Activated T-helper 1 cell treated with anti-CD3 and anti-CD28 coated beads, Interleukin-12 subunit alpha, Interleukin-12 subunit beta, Interleukin-2, Interleukin-4 antibody, amounts not matched to agents 30 ng/mL and 10 ng/mL and 1 ng/mL, durations not matched to agents 14 hours and 24 hours and 36 hours (primary cell): ENCODE measurements at regions of chr1 and their contacts with region 1.

Region 1: GRCh38 chr1:202998836-202999750 is 8.1 kb upstream of the TMEM183A start:
- DNase-seq: peak; percentile 43
- H3K4me3 Mint-ChIP-seq: peak overlapping the region; percentile 19
- H3K27ac Mint-ChIP-seq: no peak overlapping the region
- H3K4me1 Mint-ChIP-seq: peaks cover 12% of the 10 kb centered on the region
- H3K27me3 Mint-ChIP-seq: peaks cover 25% of the 10 kb centered on the region

Region 2: DNA sequence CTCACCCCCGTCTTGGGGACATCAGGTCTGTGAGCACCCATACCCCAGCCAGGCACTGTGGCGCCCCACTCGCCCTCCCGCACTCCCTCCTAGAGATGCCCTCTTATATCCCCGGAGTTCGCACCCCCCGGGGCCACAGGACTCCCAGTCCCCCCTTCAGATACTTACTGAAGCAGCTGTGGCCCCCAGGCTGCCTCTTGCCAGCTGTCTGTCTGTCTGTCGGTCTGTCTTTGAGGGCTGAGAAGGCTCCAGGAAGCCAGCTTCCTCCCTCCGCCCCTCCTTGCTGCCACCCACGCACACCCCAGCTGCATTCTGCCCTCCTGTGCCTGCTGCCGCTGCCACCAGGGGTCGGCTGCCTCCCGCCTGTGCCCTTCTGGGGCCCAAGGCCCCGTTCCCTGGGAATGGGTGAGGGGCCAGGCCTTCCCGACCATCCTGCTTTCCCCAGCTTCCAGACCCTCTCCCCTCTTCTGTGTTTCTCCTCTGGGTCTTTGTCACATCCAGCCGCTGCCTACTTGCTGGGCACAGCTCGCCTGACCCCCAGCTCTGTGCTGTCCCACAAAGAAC is 838.6 kb before region 1 on chr1 and contains the start of gene PTPN7:
- intact Hi-C with region 1: loop called (anchors 10 kb)
- DNase-seq: peak; percentile 59
- H3K4me3 Mint-ChIP-seq: peak within 1 kb of the TSS; percentile 98
- H3K27ac Mint-ChIP-seq: peak within 1 kb of the TSS; percentile 94
- H3K4me1 Mint-ChIP-seq: peaks cover 77% of the 10 kb centered on the region
- H3K27me3 Mint-ChIP-seq: no peaks in the 10 kb centered on the region
- total RNA-seq, gene PTPN7: 584 and 597 TPM in 2 replicates

Region 3: DNA sequence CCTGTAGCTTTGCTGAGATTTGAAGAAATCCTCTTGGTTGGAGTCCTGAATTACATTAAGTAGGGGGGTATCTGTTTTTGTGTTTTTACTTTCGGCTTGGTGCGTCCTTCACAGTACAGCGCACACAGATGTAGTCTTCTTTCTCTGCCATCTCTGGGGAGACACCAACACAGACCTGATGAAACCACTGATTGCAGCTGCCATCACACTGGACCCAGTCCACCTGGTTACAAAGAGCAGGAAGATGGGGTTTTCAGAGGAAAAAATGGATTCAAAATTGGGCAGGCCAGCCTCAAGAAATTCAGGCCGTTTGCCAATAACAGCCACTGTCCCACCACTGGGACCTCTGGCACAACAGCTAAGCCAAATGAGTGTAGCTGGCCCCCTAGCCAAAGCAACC is 270.1 kb before region 1 on chr1:
- intact Hi-C with region 1: no loop called
- DNase-seq: no peak
- H3K4me3 Mint-ChIP-seq: no peak overlapping the region
- H3K27ac Mint-ChIP-seq: no peak overlapping the region
- H3K4me1 Mint-ChIP-seq: no peaks in the 10 kb centered on the region
- H3K27me3 Mint-ChIP-seq: no peaks in the 10 kb centered on the region

Region 4: GRCh38 chr1:202750758-202751157 is 248.3 kb before region 1 on chr1:
- intact Hi-C with region 1: loop called (anchors 5 kb)
- DNase-seq: no peak
- H3K4me3 Mint-ChIP-seq: no peak overlapping the region
- H3K27ac Mint-ChIP-seq: no peak overlapping the region
- H3K4me1 Mint-ChIP-seq: no peaks in the 10 kb centered on the region
- H3K27me3 Mint-ChIP-seq: no peaks in the 10 kb centered on the region

Region 5: GRCh38 chr1:202926720-202927491 is 72.2 kb before region 1 on chr1 and contains the start of gene KLHL12:
- intact Hi-C with region 1: loop called (anchors 1 kb)
- DNase-seq: peak; percentile 92
- H3K4me3 Mint-ChIP-seq: peak within 1 kb of the TSS; percentile 97
- H3K27ac Mint-ChIP-seq: peak within 1 kb of the TSS; percentile 95
- H3K4me1 Mint-ChIP-seq: peaks cover 34% of the 10 kb centered on the region
- H3K27me3 Mint-ChIP-seq: peaks cover 3% of the 10 kb centered on the region
- total RNA-seq, gene KLHL12: 24.9 and 25.5 TPM in 2 replicates

Region 6: DNA sequence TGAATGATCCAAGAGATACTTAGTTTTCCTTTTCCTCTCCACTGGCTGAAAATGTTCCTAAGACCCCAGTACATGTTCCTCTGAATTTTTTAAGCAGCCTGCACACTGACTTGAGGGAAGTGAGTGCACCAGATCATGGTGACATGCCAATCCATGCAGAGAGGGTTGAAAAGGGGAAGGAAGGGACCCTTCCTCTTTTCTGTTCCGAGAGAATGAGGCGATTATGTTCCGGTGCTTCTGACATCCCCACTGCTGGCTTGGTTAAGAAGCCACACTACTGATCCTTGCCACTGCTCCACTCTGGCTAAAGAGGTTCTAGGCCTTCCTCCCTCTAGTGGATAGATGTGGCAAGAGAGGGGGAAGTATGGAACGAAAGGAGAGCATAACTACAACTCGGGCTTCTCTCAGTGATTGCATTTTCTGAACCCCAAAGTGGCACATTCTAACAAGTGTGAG is 30.2 kb before region 1 on chr1:
- intact Hi-C with region 1: loop called (anchors 2 kb)
- DNase-seq: peak; percentile 20
- H3K4me3 Mint-ChIP-seq: peak overlapping the region; percentile 48
- H3K27ac Mint-ChIP-seq: no peak overlapping the region
- H3K4me1 Mint-ChIP-seq: peaks cover 35% of the 10 kb centered on the region
- H3K27me3 Mint-ChIP-seq: peaks cover 11% of the 10 kb centered on the region